ENCODE measurements at regions of chr2 and their contacts with region 1.

Region 1: DNA sequence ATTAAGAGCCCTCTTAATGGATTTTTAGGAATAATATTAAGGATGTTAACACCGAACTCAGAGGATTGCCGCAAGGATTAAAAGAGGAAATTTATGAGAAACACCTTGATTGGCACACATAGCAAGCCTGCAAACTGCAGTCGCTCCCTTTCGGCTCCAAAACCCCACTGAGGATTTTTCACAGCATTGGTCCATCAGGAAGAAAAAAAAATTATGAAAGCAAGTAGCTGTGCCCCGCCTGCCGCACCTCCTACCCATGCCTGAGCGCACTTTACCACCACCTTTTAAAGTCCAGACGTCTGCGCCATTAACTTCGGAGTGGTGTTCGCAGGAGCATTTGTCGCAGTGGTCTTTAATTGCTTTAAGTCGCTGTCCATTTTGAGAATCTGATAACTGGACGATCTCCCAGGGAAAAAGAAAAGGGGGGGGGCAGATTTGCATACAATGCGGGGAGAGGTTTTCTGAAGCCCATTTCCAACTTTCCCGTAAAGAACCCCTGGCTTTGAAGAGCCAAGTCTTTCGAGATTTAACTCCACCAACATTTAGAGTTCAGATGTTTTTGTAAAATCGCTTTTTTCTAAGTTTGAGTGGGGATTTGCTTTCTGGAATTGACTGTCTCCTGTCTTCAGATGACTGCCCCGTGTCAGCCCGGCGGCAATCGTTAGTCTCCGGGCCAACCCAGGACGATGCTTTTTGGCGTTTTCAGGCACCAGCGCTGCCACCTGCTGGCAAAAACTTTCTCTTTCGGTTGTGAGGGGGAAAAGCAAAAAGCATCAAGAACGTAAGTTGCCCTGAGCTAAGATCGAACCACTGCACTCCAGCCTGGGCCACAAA is 914 bp upstream of the TRABD2A start:
- DNase-seq: peak; percentile 80 to 84
- H3K4me3 ChIP-seq: peak overlapping the region; percentile 30
- H3K4me3 Mint-ChIP-seq: peak overlapping the region; percentile 81
- H3K27ac Mint-ChIP-seq: no peak overlapping the region
- H3K4me1 ChIP-seq: peaks cover 11% of the 10 kb centered on the region; the same call in 1 of the 2 replicates
- H3K4me1 Mint-ChIP-seq: peaks cover 7% of the 10 kb centered on the region
- H3K27me3 ChIP-seq: no peaks in the 10 kb centered on the region
- H3K27me3 Mint-ChIP-seq: peaks cover 22% of the 10 kb centered on the region
- CTCF ChIP-seq: peak; percentile 76 to 87

Region 2: GRCh38 chr2:84495539-84496146 is 386.2 kb before region 1 on chr2:
- CTCF ChIA-PET with region 1: no interaction called
- POLR2A ChIA-PET with region 1: no interaction called
- intact Hi-C with region 1: loop called (anchors 1 kb)
- DNase-seq: peak in 1 of 2 experiments; percentile 54
- H3K4me3 ChIP-seq: no peak overlapping the region
- H3K4me3 Mint-ChIP-seq: no peak overlapping the region
- H3K27ac Mint-ChIP-seq: no peak overlapping the region
- H3K4me1 ChIP-seq: no peaks in the 10 kb centered on the region
- H3K4me1 Mint-ChIP-seq: peaks cover 5% of the 10 kb centered on the region
- H3K27me3 ChIP-seq: no peaks in the 10 kb centered on the region
- H3K27me3 Mint-ChIP-seq: no peaks in the 10 kb centered on the region
- CTCF ChIP-seq: peak; percentile 54 to 73

Region 3: GRCh38 chr2:84741296-84741765 is 140.5 kb before region 1 on chr2:
- CTCF ChIA-PET with region 1: interaction called, 4 read pairs
- POLR2A ChIA-PET with region 1: no interaction called
- intact Hi-C with region 1: loop called (anchors 1 kb)
- DNase-seq: peak; percentile 36 to 43
- H3K4me3 ChIP-seq: no peak overlapping the region
- H3K4me3 Mint-ChIP-seq: no peak overlapping the region
- H3K27ac Mint-ChIP-seq: no peak overlapping the region
- H3K4me1 ChIP-seq: no peaks in the 10 kb centered on the region
- H3K4me1 Mint-ChIP-seq: no peaks in the 10 kb centered on the region
- H3K27me3 ChIP-seq: no peaks in the 10 kb centered on the region; the same call in 1 of the 2 replicates
- H3K27me3 Mint-ChIP-seq: peaks cover 21% of the 10 kb centered on the region
- CTCF ChIP-seq: peak; percentile 23 to 54

Region 4: DNA sequence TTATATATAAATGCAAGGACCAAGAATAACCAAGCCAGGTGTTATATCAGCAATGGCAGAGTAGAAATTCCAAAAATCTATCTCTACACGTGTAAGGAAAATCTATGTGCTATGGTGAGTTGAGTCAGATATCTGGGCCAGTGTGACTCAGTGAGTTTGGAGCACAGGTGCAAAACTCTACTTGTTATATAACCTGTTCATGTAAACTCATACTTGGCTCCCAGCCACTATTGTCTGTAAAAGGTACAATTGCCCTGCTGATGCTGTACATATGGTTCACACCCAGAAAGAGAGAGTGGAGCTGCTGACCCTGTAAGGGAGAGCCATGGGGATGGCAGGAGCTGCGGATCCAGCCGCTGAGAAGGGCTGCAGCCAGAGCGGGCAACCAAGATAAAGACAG is 113.0 kb before region 1 on chr2:
- CTCF ChIA-PET with region 1: no interaction called
- POLR2A ChIA-PET with region 1: no interaction called
- intact Hi-C with region 1: no loop called
- DNase-seq: no peak
- H3K4me3 ChIP-seq: no peak overlapping the region
- H3K4me3 Mint-ChIP-seq: no peak overlapping the region
- H3K27ac Mint-ChIP-seq: no peak overlapping the region
- H3K4me1 ChIP-seq: no peaks in the 10 kb centered on the region
- H3K4me1 Mint-ChIP-seq: no peaks in the 10 kb centered on the region
- H3K27me3 ChIP-seq: no peaks in the 10 kb centered on the region
- H3K27me3 Mint-ChIP-seq: peaks cover 8% of the 10 kb centered on the region
- CTCF ChIP-seq: no peak

Measured in Caco-2 (cell line).